IMR-90 (cell line): ENCODE measurements at regions of chr6 and their contacts with region 1.

Region 1: GRCh38 chr6:110682460-110682853 is 132.8 kb downstream of the CDK19 start:
- DNase-seq: peak; percentile 81
- ATAC-seq: peak; percentile 95
- H3K4me3 ChIP-seq: no peak overlapping the region
- H3K27ac ChIP-seq: no peak overlapping the region
- H3K4me1 ChIP-seq: peaks cover 3% of the 10 kb centered on the region; the same call in 1 of the 2 replicates
- H3K27me3 ChIP-seq: no peaks in the 10 kb centered on the region
- CTCF ChIP-seq: peak; percentile 77
- POLR2A ChIP-seq: no peak
- RAD21 ChIP-seq: peak; percentile 89

Region 2: GRCh38 chr6:110815217-110816109 is 133.0 kb after region 1 on chr6 and contains the start of gene CDK19:
- CTCF ChIA-PET with region 1: interaction called, 3 read pairs
- POLR2A ChIA-PET with region 1: no interaction called
- dilution Hi-C with region 1: no loop called
- in situ Hi-C with region 1: no loop called
- intact Hi-C with region 1: loop called (anchors 2 kb)
- DNase-seq: peak; percentile 98
- ATAC-seq: peak; percentile 91
- H3K4me3 ChIP-seq: peak within 1 kb of the TSS; percentile 59
- H3K27ac ChIP-seq: peak within 1 kb of the TSS; percentile 89
- H3K4me1 ChIP-seq: no peaks in the 10 kb centered on the region; the same call in 1 of the 2 replicates
- H3K27me3 ChIP-seq: no peaks in the 10 kb centered on the region
- CTCF ChIP-seq: no peak
- POLR2A ChIP-seq: peak; percentile 86
- RAD21 ChIP-seq: 0 out of 2 replicates have a peak, but pooled peaks have one; percentile 2
- total RNA-seq, gene CDK19: 6.8 and 7.5 TPM in 2 replicates

Region 3: GRCh38 chr6:110882271-110882613 is 199.8 kb after region 1 on chr6:
- CTCF ChIA-PET with region 1: interaction called, 4 read pairs
- POLR2A ChIA-PET with region 1: interaction called, 6 read pairs
- dilution Hi-C with region 1: no loop called
- in situ Hi-C with region 1: loop called (anchors 5 kb)
- intact Hi-C with region 1: loop called (anchors 1 kb)
- DNase-seq: peak; percentile 44
- ATAC-seq: 0 out of 2 replicates have a peak, but pooled peaks have one; percentile 27
- H3K4me3 ChIP-seq: no peak overlapping the region
- H3K27ac ChIP-seq: peak overlapping the region; percentile 79; the same call in 1 of the 2 replicates
- H3K4me1 ChIP-seq: peaks cover 18% of the 10 kb centered on the region
- H3K27me3 ChIP-seq: no peaks in the 10 kb centered on the region
- CTCF ChIP-seq: no peak
- POLR2A ChIP-seq: no peak
- RAD21 ChIP-seq: no peak

Region 4: DNA sequence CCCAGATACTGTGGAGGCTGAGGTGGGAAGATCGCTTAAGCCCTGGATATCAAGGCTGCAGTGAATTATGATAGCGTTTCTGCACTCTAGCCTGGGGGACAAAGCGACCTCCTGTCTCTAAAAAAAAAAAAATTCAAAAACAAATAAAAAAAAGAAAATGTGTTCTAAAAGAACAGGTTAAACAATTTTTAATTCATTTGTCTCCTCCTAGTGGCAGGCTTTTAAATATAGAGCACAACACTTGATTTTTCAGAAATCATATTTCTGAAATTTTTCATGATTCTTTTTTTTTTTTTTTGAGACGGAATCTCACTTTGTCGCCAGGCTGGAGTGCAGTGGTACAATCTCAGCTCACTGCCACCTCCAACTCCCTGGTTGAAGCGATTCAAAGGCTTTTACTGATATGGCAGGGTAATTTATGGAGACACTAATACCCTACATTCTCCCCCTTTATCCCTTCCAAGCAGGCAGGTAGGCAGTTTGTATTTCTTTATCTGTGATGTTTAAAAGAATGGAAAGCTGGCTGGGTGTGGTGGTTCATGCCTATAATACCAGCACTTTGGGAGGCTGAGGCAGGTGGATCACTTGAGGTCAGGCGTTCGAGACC is 267.3 kb after region 1 on chr6:
- CTCF ChIA-PET with region 1: interaction called, 7 read pairs
- POLR2A ChIA-PET with region 1: no interaction called
- dilution Hi-C with region 1: no loop called
- in situ Hi-C with region 1: loop called (anchors 5 kb)
- intact Hi-C with region 1: loop called (anchors 1 kb)
- DNase-seq: peak; percentile 54
- ATAC-seq: no peak
- H3K4me3 ChIP-seq: no peak overlapping the region
- H3K27ac ChIP-seq: no peak overlapping the region
- H3K4me1 ChIP-seq: peaks cover 15% of the 10 kb centered on the region
- H3K27me3 ChIP-seq: no peaks in the 10 kb centered on the region
- CTCF ChIP-seq: peak; percentile 66
- POLR2A ChIP-seq: no peak
- RAD21 ChIP-seq: peak; percentile 53

Region 5: DNA sequence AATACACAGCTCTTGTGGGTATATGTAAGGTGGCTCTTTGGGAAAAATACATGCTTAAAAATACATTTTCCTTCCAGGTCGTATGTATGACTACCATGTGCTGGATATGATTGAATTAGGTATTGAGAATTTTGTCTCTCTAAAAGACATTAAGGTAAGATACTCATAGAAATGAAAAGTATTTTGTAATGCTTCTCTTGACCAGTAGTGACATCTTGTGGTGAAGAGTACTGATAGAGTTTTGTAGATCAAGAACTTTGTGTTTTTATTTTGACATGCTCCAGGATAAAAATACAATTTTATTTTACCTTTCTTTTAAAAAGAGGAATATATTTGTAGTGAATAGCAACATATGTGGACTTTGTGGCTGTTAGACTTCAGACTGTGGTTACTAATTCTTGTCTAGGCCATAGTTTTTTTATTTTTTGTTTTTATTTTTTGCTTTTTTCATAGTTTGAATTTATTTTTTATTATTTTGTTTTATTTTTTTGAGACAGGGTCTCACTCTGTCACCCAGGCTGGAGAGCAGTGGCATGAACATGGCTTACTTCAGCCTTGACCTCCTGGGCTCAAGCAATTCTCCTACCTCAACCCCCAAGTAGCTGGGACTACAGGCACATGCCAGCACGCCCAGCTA is 317.3 kb after region 1 on chr6:
- CTCF ChIA-PET with region 1: no interaction called
- POLR2A ChIA-PET with region 1: no interaction called
- dilution Hi-C with region 1: no loop called
- in situ Hi-C with region 1: no loop called
- intact Hi-C with region 1: loop called (anchors 5 kb)
- DNase-seq: peak; percentile 46
- ATAC-seq: peak; percentile 54; the same call in 1 of the 2 replicates
- H3K4me3 ChIP-seq: no peak overlapping the region
- H3K27ac ChIP-seq: no peak overlapping the region
- H3K4me1 ChIP-seq: no peaks in the 10 kb centered on the region
- H3K27me3 ChIP-seq: no peaks in the 10 kb centered on the region
- CTCF ChIP-seq: peak; percentile 56
- POLR2A ChIP-seq: no peak
- RAD21 ChIP-seq: peak; percentile 62